ENCODE measurements at regions of chr20 and their contacts with region 1.

Region 1: GRCh38 chr20:9616833-9617489 is 102.6 kb downstream of the LAMP5 start:
- DNase-seq: peak; percentile 61
- CTCF ChIP-seq: peak; percentile 73

Region 2: GRCh38 chr20:8829256-8829655 is 787.7 kb before region 1 on chr20:
- in situ Hi-C with region 1: no loop called
- DNase-seq: no peak
- CTCF ChIP-seq: no peak

Region 3: GRCh38 chr20:9215539-9215938 is 401.4 kb before region 1 on chr20:
- in situ Hi-C with region 1: no loop called
- DNase-seq: no peak
- CTCF ChIP-seq: no peak

Region 4: GRCh38 chr20:10060226-10060625 is 443.3 kb after region 1 on chr20:
- in situ Hi-C with region 1: no loop called
- DNase-seq: no peak
- CTCF ChIP-seq: no peak

Region 5: DNA sequence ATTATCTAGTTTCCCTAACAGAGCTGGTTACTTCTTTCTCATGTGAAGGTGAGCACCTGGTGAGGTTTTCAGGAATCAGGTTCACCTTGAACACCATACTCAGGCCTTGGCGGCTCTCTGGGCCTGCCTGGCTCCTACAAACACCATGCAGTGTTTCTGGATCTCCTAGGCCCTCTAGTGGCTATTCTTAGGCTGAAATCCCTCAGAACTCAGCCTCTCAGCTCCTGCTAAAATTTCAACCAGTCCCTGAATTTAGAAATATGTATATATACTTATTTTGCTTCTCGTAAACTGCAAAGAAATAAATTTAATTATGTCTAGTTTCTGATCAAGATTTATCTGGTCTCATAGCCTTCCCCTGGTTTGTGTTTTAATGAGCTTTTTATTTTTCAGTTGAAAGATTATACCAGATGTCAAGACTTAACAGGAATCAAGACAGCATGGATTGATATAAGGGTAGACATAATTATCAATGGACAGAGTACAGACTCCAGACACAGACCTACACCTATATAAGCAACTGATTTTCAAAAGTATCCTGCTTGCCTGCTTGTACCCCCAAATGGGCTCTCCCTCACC is 473.7 kb after region 1 on chr20:
- in situ Hi-C with region 1: loop called (anchors 25 kb)
- DNase-seq: peak; percentile 18
- CTCF ChIP-seq: peak; percentile 33

Region 6: GRCh38 chr20:10434467-10434831 is 817.5 kb after region 1 on chr20:
- in situ Hi-C with region 1: loop called (anchors 25 kb)
- DNase-seq: peak; percentile 64
- CTCF ChIP-seq: no peak

Measured in GM13976 (cell line).